Activated CD4-positive, alpha-beta T cell treated with anti-CD3 and anti-CD28 coated beads, Interleukin-2, amount 10 ng/mL, durations not matched to agents 24 days and 14 days (primary cell): ENCODE measurements at regions of chr4 and their contacts with region 1.

Region 1: GRCh38 chr4:25159884-25160713 is at the start of gene SEPSECS:
- DNase-seq: peak; percentile 98
- H3K4me3 Mint-ChIP-seq: peak within 1 kb of the TSS; percentile 85
- H3K27ac Mint-ChIP-seq: peak within 1 kb of the TSS; percentile 100
- H3K4me1 Mint-ChIP-seq: peaks cover 33% of the 10 kb centered on the region
- H3K27me3 Mint-ChIP-seq: peaks cover 2% of the 10 kb centered on the region
- total RNA-seq, gene SEPSECS: 12.0 and 13.2 TPM in 2 replicates

Region 2: GRCh38 chr4:24584175-24584850 is 575.8 kb before region 1 on chr4 and contains the start of gene DHX15:
- intact Hi-C with region 1: loop called (anchors 1 kb)
- DNase-seq: peak; percentile 97
- H3K4me3 Mint-ChIP-seq: peak within 1 kb of the TSS; percentile 95
- H3K27ac Mint-ChIP-seq: peak within 1 kb of the TSS; percentile 97
- H3K4me1 Mint-ChIP-seq: peaks cover 30% of the 10 kb centered on the region
- H3K27me3 Mint-ChIP-seq: no peaks in the 10 kb centered on the region
- total RNA-seq, gene DHX15: 263 and 265 TPM in 2 replicates

Region 3: DNA sequence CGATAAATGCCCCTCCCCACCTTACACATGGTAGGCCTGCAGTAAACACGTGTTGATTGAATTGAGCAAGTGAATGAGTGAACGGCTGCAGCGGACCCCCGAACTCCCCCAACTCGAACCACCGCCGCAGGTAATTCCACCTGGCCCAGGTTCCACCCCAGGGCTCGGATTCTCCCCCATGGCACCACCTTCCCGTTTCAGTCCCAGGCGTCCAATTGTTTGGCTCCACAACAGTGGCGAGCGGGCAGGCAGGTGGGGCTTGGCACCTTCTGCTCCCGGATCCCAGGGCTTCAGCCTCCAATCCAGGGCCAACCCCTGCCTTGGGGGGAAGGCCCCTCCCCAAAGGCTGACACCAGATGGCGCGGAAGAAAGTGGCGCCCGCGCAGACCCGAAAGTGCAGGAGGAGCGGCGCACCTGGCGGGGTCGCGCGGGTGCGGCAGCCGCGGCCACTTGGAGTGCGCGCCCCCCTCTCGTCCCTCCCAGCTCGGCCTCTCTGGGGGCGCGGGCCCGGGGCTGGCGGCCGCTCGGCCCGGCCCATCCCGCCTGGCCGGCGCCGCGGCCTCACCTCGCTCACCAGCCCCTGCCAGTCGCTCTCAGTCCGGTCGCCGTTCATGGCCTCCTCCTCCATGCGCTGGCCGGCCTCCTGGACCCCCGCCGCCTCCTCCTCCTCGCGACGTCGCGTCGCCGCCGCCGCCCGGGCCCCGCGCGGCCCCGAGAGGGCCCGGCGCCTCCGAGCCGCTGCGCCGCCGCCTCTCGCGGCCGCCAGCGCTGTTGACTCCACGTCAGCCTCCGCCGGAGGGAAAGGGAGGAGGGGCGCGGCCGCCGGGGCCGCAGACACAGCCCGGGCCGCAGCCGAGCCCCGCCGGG is 247.6 kb before region 1 on chr4 and contains the start of gene CCDC149:
- intact Hi-C with region 1: no loop called
- DNase-seq: peak; percentile 54
- H3K4me3 Mint-ChIP-seq: peak within 1 kb of the TSS; percentile 55
- H3K27ac Mint-ChIP-seq: no peak within 1 kb of the TSS
- H3K4me1 Mint-ChIP-seq: no peaks in the 10 kb centered on the region
- H3K27me3 Mint-ChIP-seq: peaks cover 31% of the 10 kb centered on the region
- total RNA-seq, gene CCDC149: not detected in 2 replicates

Region 4: DNA sequence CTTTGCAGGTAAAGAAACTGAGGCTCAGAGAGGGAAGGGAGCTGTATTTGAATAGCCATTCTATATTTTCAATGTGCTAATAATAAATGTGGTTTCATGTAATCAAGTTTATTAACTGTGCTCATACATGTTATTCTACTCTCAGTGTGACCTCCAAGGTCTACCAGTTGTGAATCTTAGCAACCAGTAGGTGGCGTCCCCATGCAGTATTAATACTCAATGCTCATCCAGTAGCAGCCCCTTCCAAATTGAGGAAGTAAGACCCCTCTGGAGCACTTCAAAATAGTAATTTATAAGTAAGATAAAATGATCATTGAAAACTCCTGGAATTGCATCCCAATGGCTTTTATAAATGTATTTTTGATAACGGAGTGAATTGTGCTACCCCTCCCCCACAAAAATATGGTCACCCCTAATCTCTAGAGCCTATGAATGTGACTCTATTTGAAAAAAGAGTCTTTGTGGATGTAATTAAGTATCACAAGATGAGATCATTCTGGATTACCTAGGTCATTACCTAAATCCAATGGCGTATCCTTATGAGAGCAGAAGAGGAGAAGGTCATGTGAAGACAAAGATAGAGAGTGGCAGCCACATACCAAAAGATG is 20.5 kb after region 1 on chr4:
- intact Hi-C with region 1: loop called (anchors 1 kb)
- DNase-seq: peak; percentile 78
- H3K4me3 Mint-ChIP-seq: no peak overlapping the region
- H3K27ac Mint-ChIP-seq: no peak overlapping the region
- H3K4me1 Mint-ChIP-seq: peaks cover 19% of the 10 kb centered on the region
- H3K27me3 Mint-ChIP-seq: no peaks in the 10 kb centered on the region

Region 5: DNA sequence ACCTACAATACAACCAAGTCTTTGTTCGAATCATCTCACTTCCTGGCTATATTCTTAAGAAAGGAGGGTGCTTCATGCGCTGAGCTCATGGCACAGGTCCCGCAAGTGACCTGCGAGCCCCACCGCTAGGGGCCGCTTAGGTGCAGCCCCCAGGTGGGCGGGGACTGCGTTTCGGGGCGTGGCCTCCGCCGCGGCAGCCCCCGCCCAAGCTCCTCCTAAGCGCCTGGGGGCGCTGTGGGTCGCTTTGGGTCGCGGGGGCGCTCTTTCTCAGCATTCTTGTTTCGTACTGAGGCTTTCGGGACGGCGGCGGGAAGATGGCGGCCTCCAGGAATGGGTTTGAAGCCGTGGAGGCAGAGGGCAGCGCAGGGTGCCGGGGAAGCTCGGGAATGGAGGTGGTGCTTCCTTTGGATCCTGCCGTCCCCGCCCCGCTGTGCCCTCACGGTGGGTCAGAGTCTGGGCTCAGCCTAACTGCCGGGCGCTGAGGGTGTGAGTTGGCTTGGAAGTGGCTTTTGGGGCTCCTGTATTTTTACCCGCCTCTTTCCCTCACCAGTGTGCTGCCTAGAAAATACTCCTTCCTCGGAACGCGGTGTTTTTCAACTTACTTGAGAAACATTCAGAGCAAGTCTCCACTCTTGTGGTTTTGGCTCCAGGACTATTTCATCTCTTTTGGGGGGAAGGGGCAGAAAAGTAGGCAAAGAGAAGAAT is 152.5 kb after region 1 on chr4 and contains the start of gene ZCCHC4:
- intact Hi-C with region 1: loop called (anchors 1 kb)
- DNase-seq: peak; percentile 97
- H3K4me3 Mint-ChIP-seq: peak within 1 kb of the TSS; percentile 100
- H3K27ac Mint-ChIP-seq: peak within 1 kb of the TSS; percentile 97
- H3K4me1 Mint-ChIP-seq: peaks cover 11% of the 10 kb centered on the region
- H3K27me3 Mint-ChIP-seq: no peaks in the 10 kb centered on the region
- total RNA-seq, gene ZCCHC4: 15.5 and 15.6 TPM in 2 replicates

Region 6: GRCh38 chr4:25900310-25900709 is 740.2 kb after region 1 on chr4:
- intact Hi-C with region 1: no loop called
- DNase-seq: no peak
- H3K4me3 Mint-ChIP-seq: no peak overlapping the region
- H3K27ac Mint-ChIP-seq: no peak overlapping the region
- H3K4me1 Mint-ChIP-seq: no peaks in the 10 kb centered on the region
- H3K27me3 Mint-ChIP-seq: no peaks in the 10 kb centered on the region

Region 7: GRCh38 chr4:25913851-25914669 is 754.0 kb after region 1 on chr4 and contains the start of gene SMIM20:
- intact Hi-C with region 1: loop called (anchors 2 kb)
- DNase-seq: peak; percentile 96
- H3K4me3 Mint-ChIP-seq: peak within 1 kb of the TSS; percentile 96
- H3K27ac Mint-ChIP-seq: peak within 1 kb of the TSS; percentile 99
- H3K4me1 Mint-ChIP-seq: peaks cover 17% of the 10 kb centered on the region
- H3K27me3 Mint-ChIP-seq: peaks cover 9% of the 10 kb centered on the region
- total RNA-seq, gene SMIM20: 17.0 and 18.9 TPM in 2 replicates